ENCODE measurements at regions of chr4 and their contacts with region 1.

Region 1: DNA sequence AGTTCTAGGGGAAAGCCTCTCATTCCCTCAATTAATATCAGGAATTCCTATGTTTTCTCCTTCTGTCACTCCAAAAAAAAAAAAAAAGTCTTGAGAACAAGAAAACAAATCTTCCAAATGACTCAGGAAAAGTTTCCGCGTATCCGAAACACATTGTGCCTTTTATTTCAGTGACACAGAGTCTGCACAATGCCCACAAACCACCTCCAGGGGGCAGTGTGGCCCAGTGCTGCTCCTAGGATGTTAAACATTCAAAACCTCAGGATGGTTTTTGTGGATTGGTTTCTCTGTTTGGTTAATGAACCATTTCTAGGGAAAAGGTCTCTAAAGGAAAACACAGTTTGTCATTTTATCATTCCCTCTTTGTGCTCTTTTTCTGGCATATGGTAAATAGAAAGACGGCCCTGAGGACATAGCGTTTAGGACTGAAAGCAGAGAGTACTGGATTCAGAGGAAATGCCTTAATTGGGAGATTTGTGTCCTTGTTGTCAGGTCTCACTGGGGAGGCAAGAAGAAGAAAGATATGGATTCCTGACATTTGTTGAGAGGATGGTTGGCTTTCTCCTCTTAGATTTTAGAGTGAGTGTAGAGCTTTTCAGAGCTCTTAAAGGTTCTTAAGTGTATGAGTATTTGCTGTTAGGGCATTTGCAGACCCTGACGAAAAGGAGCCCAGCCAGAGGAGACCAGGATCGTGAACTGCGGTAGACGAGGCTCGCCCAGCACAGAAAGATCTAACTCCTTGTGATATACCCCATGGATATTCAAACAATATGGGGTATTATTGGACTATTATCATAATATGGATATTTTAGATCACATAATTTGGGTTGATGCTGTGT is 65.7 kb upstream of the MAP9 start:
- DNase-seq: peak; percentile 55
- H3K4me3 Mint-ChIP-seq: no peak overlapping the region
- H3K27ac Mint-ChIP-seq: no peak overlapping the region
- H3K4me1 Mint-ChIP-seq: no peaks in the 10 kb centered on the region
- H3K27me3 Mint-ChIP-seq: peaks cover 5% of the 10 kb centered on the region

Region 2: GRCh38 chr4:155299103-155299502 is 143.4 kb before region 1 on chr4:
- CTCF ChIA-PET with region 1: no interaction called
- POLR2A ChIA-PET with region 1: no interaction called
- DNase-seq: no peak
- H3K4me3 Mint-ChIP-seq: no peak overlapping the region
- H3K27ac Mint-ChIP-seq: no peak overlapping the region
- H3K4me1 Mint-ChIP-seq: no peaks in the 10 kb centered on the region
- H3K27me3 Mint-ChIP-seq: no peaks in the 10 kb centered on the region

Region 3: DNA sequence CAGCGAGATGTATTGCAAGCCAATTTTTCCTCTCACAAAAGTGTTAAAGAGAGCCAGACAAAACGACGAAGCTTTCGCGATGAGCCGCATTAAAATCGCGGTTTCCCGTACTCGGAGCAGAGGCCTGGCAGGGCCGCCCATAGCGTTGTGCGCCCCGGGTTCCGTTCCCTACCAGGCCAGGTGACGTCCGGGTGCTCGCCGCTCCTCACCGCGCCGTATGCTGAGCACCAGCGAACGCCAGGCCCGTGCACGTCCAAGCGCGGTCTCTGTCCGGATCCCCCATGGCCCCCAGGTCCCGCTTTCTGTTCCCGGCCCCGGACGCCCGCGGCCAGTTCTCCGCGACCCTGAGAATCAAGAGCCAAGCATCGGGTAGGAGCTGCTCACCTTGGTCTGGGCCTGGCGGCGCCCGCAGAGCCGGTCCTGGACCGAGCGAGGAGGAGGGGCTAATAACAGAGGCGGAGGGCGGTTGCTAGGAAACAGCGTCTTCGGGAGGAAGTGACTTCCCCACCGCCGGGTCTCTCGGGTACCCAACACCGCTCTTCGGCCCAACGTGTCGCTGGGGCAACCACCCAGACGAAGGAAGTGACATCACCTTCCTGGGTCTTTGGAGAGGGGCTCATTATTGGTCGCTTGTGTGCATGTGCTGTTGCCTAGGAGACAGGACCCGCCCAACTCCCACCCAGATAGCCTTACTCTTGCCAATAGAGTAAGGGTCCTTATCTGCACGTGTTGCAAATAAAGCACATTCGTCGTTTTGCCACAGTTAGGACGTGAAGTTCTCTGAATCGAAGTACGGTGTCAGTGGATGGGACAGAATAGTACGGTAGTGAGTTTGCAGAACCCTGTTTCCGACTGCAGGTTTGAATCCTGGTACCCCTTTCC is 65.9 kb before region 1 on chr4 and contains the start of gene MAP9:
- CTCF ChIA-PET with region 1: no interaction called
- POLR2A ChIA-PET with region 1: no interaction called
- DNase-seq: peak; percentile 87
- H3K4me3 Mint-ChIP-seq: peak within 1 kb of the TSS; percentile 82
- H3K27ac Mint-ChIP-seq: peak within 1 kb of the TSS; percentile 68
- H3K4me1 Mint-ChIP-seq: peaks cover 20% of the 10 kb centered on the region
- H3K27me3 Mint-ChIP-seq: no peaks in the 10 kb centered on the region
- total RNA-seq, gene MAP9: 2.7 to 3.6 TPM

Region 4: GRCh38 chr4:155787113-155787710 is 344.7 kb after region 1 on chr4:
- CTCF ChIA-PET with region 1: interaction called, 13 read pairs
- POLR2A ChIA-PET with region 1: no interaction called
- DNase-seq: no peak
- H3K4me3 Mint-ChIP-seq: no peak overlapping the region
- H3K27ac Mint-ChIP-seq: no peak overlapping the region
- H3K4me1 Mint-ChIP-seq: no peaks in the 10 kb centered on the region
- H3K27me3 Mint-ChIP-seq: no peaks in the 10 kb centered on the region